Right lobe of liver (tissue), 6 donors: ENCODE measurements at regions of chr12 and their contacts with region 1.

Region 1: GRCh38 chr12:42023733-42024494 is 120.8 kb downstream of the GXYLT1 start:
- DNase-seq: peak; percentile 76 to 81 (median 78)
- ATAC-seq: peak; percentile 92 to 98 (median 96)
- H3K4me3 ChIP-seq: peak overlapping the region; percentile 17 to 43 (median 34)
- H3K27ac ChIP-seq: no peak overlapping the region
- H3K4me1 ChIP-seq: peaks cover 0 to 5% (median 0%) of the 10 kb centered on the region in 4 donors
- H3K27me3 ChIP-seq: no peaks in the 10 kb centered on the region
- CTCF ChIP-seq: peak; percentile 81 to 96 (median 94)
- POLR2A ChIP-seq: no peak

Region 2: GRCh38 chr12:40946612-40947194 is 1077.2 kb before region 1 on chr12:
- intact Hi-C with region 1: loop called in 1 of 2 experiments (anchors 10 kb)
- DNase-seq: no peak
- ATAC-seq: peak; percentile 48 to 75 (median 68)
- H3K4me3 ChIP-seq: no peak overlapping the region
- H3K27ac ChIP-seq: no peak overlapping the region
- H3K4me1 ChIP-seq: no peaks in the 10 kb centered on the region
- H3K27me3 ChIP-seq: no peaks in the 10 kb centered on the region
- CTCF ChIP-seq: peak; percentile 66 to 74 (median 68)
- POLR2A ChIP-seq: no peak